Caco-2 (cell line): ENCODE measurements at regions of chr3 and their contacts with region 1.

Region 1: GRCh38 chr3:136075218-136075808 is 109.8 kb downstream of the PPP2R3A start:
- DNase-seq: peak; percentile 61 to 69
- H3K4me3 ChIP-seq: no peak overlapping the region
- H3K4me3 Mint-ChIP-seq: no peak overlapping the region
- H3K27ac Mint-ChIP-seq: peak overlapping the region; percentile 15
- H3K4me1 ChIP-seq: peaks cover 13% of the 10 kb centered on the region
- H3K4me1 Mint-ChIP-seq: peaks cover 9% of the 10 kb centered on the region
- H3K27me3 ChIP-seq: no peaks in the 10 kb centered on the region
- H3K27me3 Mint-ChIP-seq: no peaks in the 10 kb centered on the region
- CTCF ChIP-seq: peak; percentile 78 to 86

Region 2: GRCh38 chr3:136162322-136162721 is 87.0 kb after region 1 on chr3:
- CTCF ChIA-PET with region 1: no interaction called
- POLR2A ChIA-PET with region 1: no interaction called
- intact Hi-C with region 1: no loop called
- DNase-seq: no peak
- H3K4me3 ChIP-seq: no peak overlapping the region
- H3K4me3 Mint-ChIP-seq: no peak overlapping the region
- H3K27ac Mint-ChIP-seq: no peak overlapping the region
- H3K4me1 ChIP-seq: no peaks in the 10 kb centered on the region; the same call in 1 of the 2 replicates
- H3K4me1 Mint-ChIP-seq: peaks cover 15% of the 10 kb centered on the region
- H3K27me3 ChIP-seq: no peaks in the 10 kb centered on the region
- H3K27me3 Mint-ChIP-seq: no peaks in the 10 kb centered on the region
- CTCF ChIP-seq: no peak

Region 3: DNA sequence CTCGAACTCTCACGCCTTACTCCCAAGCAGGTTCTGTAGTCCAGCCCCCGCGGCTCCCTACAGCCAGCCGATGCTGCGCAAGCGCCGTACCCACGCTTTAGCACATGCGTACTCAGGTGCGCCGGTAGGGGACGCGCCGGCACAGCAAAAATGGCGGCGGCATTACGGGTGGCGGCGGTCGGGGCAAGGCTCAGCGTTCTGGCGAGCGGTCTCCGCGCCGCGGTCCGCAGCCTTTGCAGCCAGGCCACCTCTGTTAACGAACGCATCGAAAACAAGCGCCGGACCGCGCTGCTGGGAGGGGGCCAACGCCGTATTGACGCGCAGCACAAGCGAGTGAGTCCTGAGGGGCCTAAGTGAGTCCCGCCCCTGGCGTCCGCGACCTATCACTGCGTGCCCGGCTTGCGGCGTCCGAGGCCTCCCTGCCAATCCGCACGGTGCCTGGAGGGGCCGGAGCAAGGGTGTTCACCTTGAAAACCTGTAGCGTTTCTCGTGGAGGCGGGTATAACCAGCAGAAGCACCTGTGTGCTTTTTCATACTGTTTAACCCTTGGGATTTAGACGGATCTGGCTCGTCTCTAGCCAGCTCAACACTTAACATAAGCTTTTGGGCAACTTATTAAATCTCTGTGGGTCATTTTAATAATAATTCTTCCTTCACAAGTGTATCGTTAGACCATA is 175.1 kb after region 1 on chr3 and contains the start of gene PCCB:
- CTCF ChIA-PET with region 1: no interaction called
- POLR2A ChIA-PET with region 1: no interaction called
- intact Hi-C with region 1: loop called (anchors 1 kb)
- DNase-seq: peak; percentile 97 to 98
- H3K4me3 ChIP-seq: peak within 1 kb of the TSS; percentile 44
- H3K4me3 Mint-ChIP-seq: peak within 1 kb of the TSS; percentile 80
- H3K27ac Mint-ChIP-seq: peak within 1 kb of the TSS; percentile 99
- H3K4me1 ChIP-seq: peaks cover 33% of the 10 kb centered on the region
- H3K4me1 Mint-ChIP-seq: peaks cover 33% of the 10 kb centered on the region
- H3K27me3 ChIP-seq: no peaks in the 10 kb centered on the region
- H3K27me3 Mint-ChIP-seq: no peaks in the 10 kb centered on the region
- CTCF ChIP-seq: peak; percentile 76 to 87
- total RNA-seq, gene PCCB: 39.7 and 45.5 TPM in 2 replicates

Region 4: DNA sequence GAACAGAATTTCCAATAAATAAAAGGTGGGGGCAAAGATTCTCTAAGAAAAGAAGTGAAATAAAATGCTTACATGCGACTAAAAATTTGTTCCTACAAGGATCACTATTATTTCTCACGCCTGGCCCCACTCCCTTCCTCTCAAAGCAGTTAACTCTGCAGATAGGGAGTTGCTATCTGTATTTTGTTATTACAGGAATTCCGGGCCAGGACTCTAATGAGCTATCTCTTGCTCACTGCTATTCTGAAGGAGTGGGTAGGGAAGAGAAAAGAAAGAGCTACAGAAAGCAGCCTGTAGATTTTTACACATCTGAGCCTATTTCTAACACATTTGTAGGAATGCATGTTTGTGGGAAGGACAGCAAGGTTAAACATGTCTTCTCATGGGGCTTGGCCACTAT is 315.3 kb after region 1 on chr3:
- CTCF ChIA-PET with region 1: interaction called, 5 read pairs
- POLR2A ChIA-PET with region 1: no interaction called
- intact Hi-C with region 1: loop called (anchors 5 kb)
- DNase-seq: no peak
- H3K4me3 ChIP-seq: no peak overlapping the region
- H3K4me3 Mint-ChIP-seq: no peak overlapping the region
- H3K27ac Mint-ChIP-seq: no peak overlapping the region
- H3K4me1 ChIP-seq: no peaks in the 10 kb centered on the region
- H3K4me1 Mint-ChIP-seq: no peaks in the 10 kb centered on the region
- H3K27me3 ChIP-seq: no peaks in the 10 kb centered on the region
- H3K27me3 Mint-ChIP-seq: no peaks in the 10 kb centered on the region
- CTCF ChIP-seq: no peak

Region 5: DNA sequence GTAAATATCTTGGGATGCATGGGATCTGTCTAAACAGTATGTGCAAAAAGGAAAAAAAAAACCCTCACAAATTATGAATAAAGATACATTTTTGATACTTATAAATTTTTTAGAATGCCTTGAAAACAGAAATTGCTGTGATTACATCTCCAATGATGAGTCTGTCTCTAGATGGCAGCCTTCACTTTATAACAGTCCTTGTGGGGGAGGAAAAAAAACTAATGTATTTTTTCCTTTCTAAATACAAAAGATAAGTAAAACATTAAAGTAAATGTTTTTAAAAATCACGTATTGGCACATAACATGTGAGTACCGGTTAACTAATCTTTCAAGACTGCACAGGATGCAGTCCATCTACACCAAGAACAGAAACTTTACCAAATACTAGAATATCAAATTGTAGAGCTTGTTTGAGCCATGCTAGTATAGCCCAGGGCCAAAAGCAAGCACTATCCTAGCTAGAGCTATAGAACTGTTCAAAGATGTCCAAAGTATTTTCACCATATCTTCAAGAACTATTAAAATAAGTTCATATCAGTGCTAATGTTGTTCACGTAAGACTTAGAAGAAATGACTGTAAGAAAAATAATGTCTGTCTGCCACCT is 470.5 kb after region 1 on chr3:
- CTCF ChIA-PET with region 1: no interaction called
- POLR2A ChIA-PET with region 1: no interaction called
- intact Hi-C with region 1: loop called (anchors 5 kb)
- DNase-seq: no peak
- H3K4me3 ChIP-seq: no peak overlapping the region
- H3K4me3 Mint-ChIP-seq: no peak overlapping the region
- H3K27ac Mint-ChIP-seq: no peak overlapping the region
- H3K4me1 ChIP-seq: 0 out of 2 replicates have a peak, but pooled peaks cover 8% of the 10 kb centered on the region
- H3K4me1 Mint-ChIP-seq: peaks cover 10% of the 10 kb centered on the region
- H3K27me3 ChIP-seq: no peaks in the 10 kb centered on the region
- H3K27me3 Mint-ChIP-seq: no peaks in the 10 kb centered on the region
- CTCF ChIP-seq: peak; percentile 10 to 30

Region 6: GRCh38 chr3:137013955-137014688 is 938.8 kb after region 1 on chr3:
- CTCF ChIA-PET with region 1: interaction called, 4 read pairs
- POLR2A ChIA-PET with region 1: no interaction called
- intact Hi-C with region 1: loop called (anchors 1 kb)
- DNase-seq: peak; percentile 85 to 90
- H3K4me3 ChIP-seq: peak overlapping the region; percentile 52
- H3K4me3 Mint-ChIP-seq: peak overlapping the region; percentile 88
- H3K27ac Mint-ChIP-seq: peak overlapping the region; percentile 87
- H3K4me1 ChIP-seq: 0 out of 2 replicates have a peak, but pooled peaks cover 3% of the 10 kb centered on the region
- H3K4me1 Mint-ChIP-seq: no peaks in the 10 kb centered on the region
- H3K27me3 ChIP-seq: no peaks in the 10 kb centered on the region
- H3K27me3 Mint-ChIP-seq: no peaks in the 10 kb centered on the region
- CTCF ChIP-seq: peak; percentile 70 to 90